Left lung (tissue), 14 donors: ENCODE measurements at regions of chr19 and their contacts with region 1.

Region 1: DNA sequence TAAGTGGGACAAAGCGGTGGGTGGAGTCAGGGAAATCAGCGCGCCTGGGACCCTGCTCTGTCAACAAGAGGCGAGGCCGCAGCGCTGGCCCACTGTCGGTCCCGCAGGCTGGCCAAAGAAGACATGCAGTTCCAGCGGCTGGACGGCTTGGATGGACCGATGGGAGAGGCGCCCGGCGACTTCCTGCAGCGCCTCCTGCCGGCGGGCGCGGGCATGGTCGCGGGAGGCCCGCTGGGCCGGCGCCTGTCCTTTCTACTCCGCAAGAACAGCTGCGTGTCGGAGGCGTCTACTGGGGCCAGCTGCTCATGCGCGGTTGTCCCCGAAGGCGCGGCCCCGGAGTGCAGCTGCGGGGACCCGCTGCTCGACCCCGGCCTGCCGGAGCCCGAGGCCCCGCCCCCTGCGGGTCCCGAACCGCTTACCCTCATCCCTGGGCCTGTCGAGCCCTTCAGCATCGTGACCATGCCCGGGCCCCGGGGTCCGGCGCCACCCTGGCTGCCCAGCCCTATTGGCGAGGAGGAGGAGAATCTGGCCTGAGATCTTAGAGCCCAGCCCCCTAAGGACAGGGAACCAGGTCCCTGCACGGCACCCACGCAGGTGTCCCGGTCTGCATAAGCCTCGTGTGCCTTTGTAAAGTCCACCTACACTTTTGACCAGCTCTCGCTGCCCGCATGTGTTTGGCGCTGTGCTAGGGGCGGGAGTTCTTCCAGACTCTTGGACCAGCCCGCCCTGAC is 6.1 kb downstream of the BEST2 start:
- DNase-seq: peak; percentile 42 to 93 (median 73)
- ATAC-seq: peak; percentile 94
- H3K4me3 ChIP-seq: peak overlapping the region; percentile 30 to 32
- H3K27ac ChIP-seq: no peak overlapping the region
- H3K4me1 ChIP-seq: peaks cover 0 to 17% of the 10 kb centered on the region in 2 donors
- H3K27me3 ChIP-seq: peaks cover 0 to 39% of the 10 kb centered on the region in 2 donors
- CTCF ChIP-seq: peak; percentile 87 to 96

Region 2: GRCh38 chr19:12224676-12225075 is 533.0 kb before region 1 on chr19:
- intact Hi-C with region 1: no loop called
- DNase-seq: no peak
- ATAC-seq: no peak
- H3K4me3 ChIP-seq: no peak overlapping the region
- H3K27ac ChIP-seq: no peak overlapping the region
- H3K4me1 ChIP-seq: no peaks in the 10 kb centered on the region
- H3K27me3 ChIP-seq: no peaks in the 10 kb centered on the region
- CTCF ChIP-seq: no peak

Region 3: GRCh38 chr19:12847159-12848139 is 89.7 kb after region 1 on chr19:
- intact Hi-C with region 1: loop called in 1 of 2 experiments (anchors 5 kb)
- DNase-seq: peak; percentile 76 to 99 (median 86)
- ATAC-seq: peak; percentile 100
- H3K4me3 ChIP-seq: no peak overlapping the region
- H3K27ac ChIP-seq: no peak overlapping the region
- H3K4me1 ChIP-seq: peaks cover 0 to 12% of the 10 kb centered on the region in 2 donors
- H3K27me3 ChIP-seq: peaks cover 0 to 76% of the 10 kb centered on the region in 2 donors
- CTCF ChIP-seq: peak; percentile 99 to 100

Region 4: GRCh38 chr19:12983542-12984142 is 225.9 kb after region 1 on chr19:
- intact Hi-C with region 1: no loop called
- DNase-seq: peak; percentile 72 to 93 (median 81)
- ATAC-seq: peak; percentile 96
- H3K4me3 ChIP-seq: peak overlapping the region in 1 of 2 donors; percentile 18
- H3K27ac ChIP-seq: no peak overlapping the region
- H3K4me1 ChIP-seq: peaks cover 0 to 21% of the 10 kb centered on the region in 2 donors
- H3K27me3 ChIP-seq: peaks cover 0 to 12% of the 10 kb centered on the region in 2 donors
- CTCF ChIP-seq: peak; percentile 95 to 98